HepG2 (cell line): ENCODE measurements at regions of chr13 and their contacts with region 1.

Region 1: GRCh38 chr13:28792992-28793391 is 27.1 kb upstream of the MTUS2 start:
- DNase-seq: no peak
- ATAC-seq: no peak
- H3K4me3 ChIP-seq: no peak overlapping the region
- H3K27ac ChIP-seq: no peak overlapping the region
- H3K4me1 ChIP-seq: peaks cover 11% of the 10 kb centered on the region; the same call in 1 of the 2 replicates
- H3K27me3 ChIP-seq: peaks cover 0 to 1% of the 10 kb centered on the region in 2 experiments; a peak in 2 of 5 replicates
- CTCF ChIP-seq: no peak
- EP300 ChIP-seq: no peak
- POLR2A ChIP-seq: no peak
- RAD21 ChIP-seq: no peak

Region 2: GRCh38 chr13:27728271-27728670 is 1064.7 kb before region 1 on chr13:
- CTCF ChIA-PET with region 1: no interaction called
- POLR2A ChIA-PET with region 1: no interaction called
- in situ Hi-C with region 1: no loop called
- intact Hi-C with region 1: no loop called
- DNase-seq: no peak
- ATAC-seq: peak; percentile 63
- H3K4me3 ChIP-seq: no peak overlapping the region
- H3K27ac ChIP-seq: no peak overlapping the region
- H3K4me1 ChIP-seq: no peaks in the 10 kb centered on the region
- H3K27me3 ChIP-seq: peaks cover 0 to 26% of the 10 kb centered on the region in 2 experiments; a peak in 3 of 5 replicates
- CTCF ChIP-seq: peak; percentile 11; the same call in 1 of the 2 replicates
- EP300 ChIP-seq: no peak
- POLR2A ChIP-seq: no peak
- RAD21 ChIP-seq: no peak

Region 3: GRCh38 chr13:28258417-28258816 is 534.6 kb before region 1 on chr13:
- CTCF ChIA-PET with region 1: no interaction called
- POLR2A ChIA-PET with region 1: no interaction called
- in situ Hi-C with region 1: no loop called
- intact Hi-C with region 1: no loop called
- DNase-seq: no peak
- ATAC-seq: no peak
- H3K4me3 ChIP-seq: no peak overlapping the region
- H3K27ac ChIP-seq: no peak overlapping the region
- H3K4me1 ChIP-seq: no peaks in the 10 kb centered on the region
- H3K27me3 ChIP-seq: no peaks in the 10 kb centered on the region
- CTCF ChIP-seq: no peak
- EP300 ChIP-seq: no peak
- POLR2A ChIP-seq: no peak
- RAD21 ChIP-seq: no peak

Region 4: GRCh38 chr13:28679628-28680027 is 113.4 kb before region 1 on chr13:
- CTCF ChIA-PET with region 1: interaction called, 5 read pairs
- POLR2A ChIA-PET with region 1: no interaction called
- in situ Hi-C with region 1: loop called (anchors 5 kb)
- intact Hi-C with region 1: loop called (anchors 1 kb)
- DNase-seq: peak; percentile 9
- ATAC-seq: peak; percentile 59
- H3K4me3 ChIP-seq: no peak overlapping the region
- H3K27ac ChIP-seq: no peak overlapping the region
- H3K4me1 ChIP-seq: no peaks in the 10 kb centered on the region
- H3K27me3 ChIP-seq: no peaks in the 10 kb centered on the region
- CTCF ChIP-seq: 0 out of 2 replicates have a peak, but pooled peaks have one; percentile 11
- EP300 ChIP-seq: no peak
- POLR2A ChIP-seq: no peak
- RAD21 ChIP-seq: no peak